ENCODE measurements at regions of chr7 and their contacts with region 1.

Region 1: GRCh38 chr7:141014524-141015395 is at the start of gene MRPS33:
- DNase-seq: peak; percentile 95 to 98 (median 97)
- ATAC-seq: peak; percentile 99 to 100 (median 100)
- H3K4me3 ChIP-seq: peak within 1 kb of the TSS; percentile 47 to 87 (median 66)
- H3K27ac ChIP-seq: peak within 1 kb of the TSS; percentile 21 to 96 (median 90)
- H3K4me1 ChIP-seq: peaks cover 0 to 19% (median 12%) of the 10 kb centered on the region in 12 donors
- H3K27me3 ChIP-seq: peaks cover 0 to 5% (median 0%) of the 10 kb centered on the region in 9 donors
- CTCF ChIP-seq: peak in 10 of 12 donors; percentile 13 to 80 (median 52)
- POLR2A ChIP-seq: peak in 1 of 2 donors; percentile 64
- total RNA-seq, gene MRPS33: 43.7 to 137 (median 105) TPM

Region 2: GRCh38 chr7:140673063-140673773 is 341.5 kb before region 1 on chr7:
- intact Hi-C with region 1: loop called in 6 of 10 experiments (anchors 2 to 10 kb)
- DNase-seq: peak; percentile 45 to 78 (median 48)
- ATAC-seq: peak in 3 of 4 donors; percentile 31 to 73 (median 53)
- H3K4me3 ChIP-seq: peak overlapping the region; percentile 54 to 97 (median 80)
- H3K27ac ChIP-seq: peak overlapping the region; percentile 62 to 89 (median 79)
- H3K4me1 ChIP-seq: peaks cover 0 to 37% (median 21%) of the 10 kb centered on the region in 12 donors
- H3K27me3 ChIP-seq: no peaks in the 10 kb centered on the region
- CTCF ChIP-seq: peak in 2 of 12 donors; percentile 5 to 8
- POLR2A ChIP-seq: no peak

Region 3: DNA sequence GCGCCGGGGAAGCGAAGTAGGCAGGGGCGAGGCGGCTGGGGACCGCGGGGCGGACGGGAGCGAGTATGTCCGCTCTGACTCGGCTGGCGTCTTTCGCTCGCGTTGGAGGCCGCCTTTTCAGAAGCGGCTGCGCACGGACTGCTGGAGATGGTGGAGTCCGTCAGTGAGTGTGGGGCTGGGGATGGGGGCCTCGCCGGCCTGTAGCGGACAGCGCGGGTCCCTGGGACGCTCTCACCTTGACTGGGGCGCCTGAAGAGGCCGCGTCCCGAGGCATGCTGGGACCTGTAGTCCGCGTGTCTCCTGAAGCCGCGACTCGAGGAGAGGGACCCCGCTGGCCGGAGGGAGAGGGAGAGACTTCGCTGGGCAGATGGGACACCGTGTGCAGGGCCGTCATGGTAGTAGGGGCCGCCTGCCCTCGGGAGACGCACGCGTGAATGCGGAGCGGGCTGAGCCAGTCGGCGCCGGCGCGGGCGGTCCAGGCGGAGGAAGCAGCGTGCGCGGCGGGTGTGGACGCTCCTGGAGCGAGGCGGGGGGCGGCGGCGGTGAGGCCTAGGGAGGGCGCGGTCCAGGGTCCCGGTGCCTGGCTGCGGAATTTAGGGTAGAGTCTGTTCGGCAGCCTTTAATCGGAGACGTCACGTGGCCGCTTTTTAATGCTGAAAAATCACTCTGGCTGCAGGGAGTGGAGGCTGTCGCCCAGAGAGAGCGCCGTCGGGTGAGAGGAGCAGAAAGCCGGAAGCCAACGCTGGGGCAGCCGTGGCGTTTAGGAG is 317.9 kb before region 1 on chr7 and contains the start of gene NDUFB2:
- intact Hi-C with region 1: loop called in 1 of 10 experiments (anchors 10 kb)
- DNase-seq: peak in 4 of 5 donors; percentile 75 to 88 (median 83)
- ATAC-seq: peak; percentile 90 to 94 (median 93)
- H3K4me3 ChIP-seq: peak within 1 kb of the TSS; percentile 49 to 91 (median 82)
- H3K27ac ChIP-seq: peak within 1 kb of the TSS; percentile 90 to 99 (median 96)
- H3K4me1 ChIP-seq: peaks cover 4 to 32% (median 23%) of the 10 kb centered on the region in 12 donors
- H3K27me3 ChIP-seq: no peaks in the 10 kb centered on the region
- CTCF ChIP-seq: no peak
- POLR2A ChIP-seq: peak in 1 of 2 donors; percentile 93
- total RNA-seq, gene NDUFB2: 458 to 1,005 (median 615) TPM

Region 4: GRCh38 chr7:140924019-140924820 is 90.5 kb before region 1 on chr7:
- intact Hi-C with region 1: loop called in 6 of 10 experiments (anchors 2 to 10 kb)
- DNase-seq: peak; percentile 78 to 92 (median 83)
- ATAC-seq: peak; percentile 57 to 86 (median 80)
- H3K4me3 ChIP-seq: peak overlapping the region; percentile 75 to 99 (median 92)
- H3K27ac ChIP-seq: peak overlapping the region; percentile 95 to 100 (median 98)
- H3K4me1 ChIP-seq: peaks cover 0 to 46% (median 31%) of the 10 kb centered on the region in 12 donors
- H3K27me3 ChIP-seq: no peaks in the 10 kb centered on the region
- CTCF ChIP-seq: peak in 9 of 12 donors; percentile 19 to 61 (median 43)
- POLR2A ChIP-seq: peak in 1 of 2 donors; percentile 26

Region 5: DNA sequence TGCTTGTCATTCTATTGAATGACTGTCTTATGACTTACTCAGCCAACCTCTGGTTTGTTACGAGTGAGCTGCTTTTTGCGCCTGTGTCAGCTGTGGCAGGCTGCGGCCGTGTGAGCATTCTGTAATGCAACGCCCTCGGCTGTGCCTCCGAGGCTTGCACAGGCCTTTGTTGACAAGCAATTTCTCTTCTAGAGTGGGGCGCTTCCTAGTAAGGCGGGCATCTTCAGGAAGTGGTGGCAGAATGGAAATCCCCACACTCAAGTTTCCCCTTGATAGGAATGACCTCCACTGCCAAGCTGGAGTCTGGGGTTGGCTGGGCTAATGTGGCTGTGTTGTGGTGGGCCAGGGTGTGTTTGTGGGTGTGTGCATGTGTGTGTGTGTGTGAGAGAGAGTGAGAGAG is 38.9 kb after region 1 on chr7:
- intact Hi-C with region 1: no loop called
- DNase-seq: no peak
- ATAC-seq: no peak
- H3K4me3 ChIP-seq: no peak overlapping the region
- H3K27ac ChIP-seq: no peak overlapping the region
- H3K4me1 ChIP-seq: no peaks in the 10 kb centered on the region
- H3K27me3 ChIP-seq: no peaks in the 10 kb centered on the region
- CTCF ChIP-seq: no peak
- POLR2A ChIP-seq: no peak

Region 6: GRCh38 chr7:141231018-141231792 is 216.4 kb after region 1 on chr7:
- intact Hi-C with region 1: loop called in 2 of 10 experiments (anchors 10 kb)
- DNase-seq: peak in 3 of 5 donors; percentile 25 to 47 (median 29)
- ATAC-seq: peak; percentile 61 to 86 (median 78)
- H3K4me3 ChIP-seq: no peak overlapping the region
- H3K27ac ChIP-seq: no peak overlapping the region
- H3K4me1 ChIP-seq: peaks cover 0 to 6% (median 0%) of the 10 kb centered on the region in 12 donors
- H3K27me3 ChIP-seq: no peaks in the 10 kb centered on the region
- CTCF ChIP-seq: peak in 11 of 12 donors; percentile 9 to 57 (median 31)
- POLR2A ChIP-seq: no peak

Region 7: GRCh38 chr7:141641876-141642275 is 627.1 kb after region 1 on chr7:
- intact Hi-C with region 1: loop called in 1 of 10 experiments (anchors 5 kb)
- DNase-seq: no peak
- ATAC-seq: peak in 2 of 4 donors; percentile 62 to 64
- H3K4me3 ChIP-seq: no peak overlapping the region
- H3K27ac ChIP-seq: no peak overlapping the region
- H3K4me1 ChIP-seq: peaks cover 0 to 11% (median 0%) of the 10 kb centered on the region in 12 donors
- H3K27me3 ChIP-seq: no peaks in the 10 kb centered on the region
- CTCF ChIP-seq: peak in 6 of 12 donors; percentile 10 to 43 (median 18)
- POLR2A ChIP-seq: no peak

Measured in heart left ventricle (tissue), 16 donors.